ENCODE measurements at regions of chr1 and their contacts with region 1.

Region 1: DNA sequence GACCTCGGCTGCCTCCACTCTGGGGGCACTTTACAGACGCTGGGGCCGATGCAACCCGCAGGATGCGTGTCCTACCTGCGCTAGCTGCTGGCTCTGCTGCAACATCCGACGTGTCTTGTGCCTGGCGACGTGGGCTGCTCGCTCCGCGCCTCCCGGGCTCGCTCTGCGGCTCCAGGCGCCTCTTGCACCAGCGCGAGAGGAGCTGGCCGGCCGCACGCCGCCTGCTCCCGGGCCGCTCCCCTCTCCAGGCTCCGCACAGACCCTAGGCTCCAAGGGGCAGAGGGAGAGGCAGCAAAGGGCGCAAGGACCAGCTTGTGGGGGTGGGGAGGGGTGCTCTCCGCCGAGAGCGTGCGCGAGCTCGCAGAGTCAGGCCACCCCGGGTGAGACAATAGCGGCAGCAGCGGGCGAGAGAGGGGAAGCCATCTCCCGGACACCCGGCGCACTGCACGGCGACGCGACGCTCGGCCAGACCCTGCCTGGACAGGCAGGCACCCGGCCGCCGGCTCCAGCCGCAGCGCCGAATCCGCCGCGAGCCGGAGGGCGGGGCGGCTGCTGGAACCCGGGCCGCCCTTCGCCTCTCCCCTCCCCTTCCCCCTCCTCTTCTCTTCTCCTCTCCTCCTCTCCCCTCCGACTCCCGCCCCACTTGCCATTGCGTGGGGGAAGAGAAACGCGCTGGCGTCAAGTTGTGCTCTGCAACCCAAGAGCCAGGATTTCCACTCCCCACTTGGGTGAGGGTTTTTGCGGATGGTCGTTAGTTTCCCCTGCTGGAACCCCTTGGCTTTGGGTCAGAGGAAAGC is at the start of gene PIK3C2B:
- DNase-seq: peak; percentile 52 to 76 (median 71)
- H3K4me3 ChIP-seq: peak within 1 kb of the TSS; percentile 76
- H3K27ac ChIP-seq: peak within 1 kb of the TSS; percentile 61
- H3K4me1 ChIP-seq: peaks cover 10% of the 10 kb centered on the region
- H3K27me3 ChIP-seq: no peaks in the 10 kb centered on the region
- CTCF ChIP-seq: peak in 2 of 3 donors; percentile 56 to 73
- EP300 ChIP-seq: no peak
- POLR2A ChIP-seq: peak; percentile 9
- total RNA-seq, gene PIK3C2B: 5.6 to 26.0 (median 12.8) TPM

Region 2: GRCh38 chr1:204431310-204432165 is 62.9 kb before region 1 on chr1:
- intact Hi-C with region 1: no loop called
- DNase-seq: peak; percentile 73 to 88 (median 85)
- H3K4me3 ChIP-seq: no peak overlapping the region
- H3K27ac ChIP-seq: no peak overlapping the region
- H3K4me1 ChIP-seq: no peaks in the 10 kb centered on the region
- H3K27me3 ChIP-seq: no peaks in the 10 kb centered on the region
- CTCF ChIP-seq: peak; percentile 48 to 85 (median 78)
- EP300 ChIP-seq: no peak
- POLR2A ChIP-seq: no peak

Region 3: GRCh38 chr1:204446370-204447111 is 47.9 kb before region 1 on chr1:
- intact Hi-C with region 1: loop called in 2 of 4 experiments (anchors 5 kb)
- DNase-seq: peak; percentile 46 to 69 (median 65)
- H3K4me3 ChIP-seq: no peak overlapping the region
- H3K27ac ChIP-seq: no peak overlapping the region
- H3K4me1 ChIP-seq: no peaks in the 10 kb centered on the region
- H3K27me3 ChIP-seq: no peaks in the 10 kb centered on the region
- CTCF ChIP-seq: peak in 2 of 3 donors; percentile 43 to 68
- EP300 ChIP-seq: no peak
- POLR2A ChIP-seq: no peak